A549 (cell line): ENCODE measurements at regions of chr12 and their contacts with region 1.

Region 1: DNA sequence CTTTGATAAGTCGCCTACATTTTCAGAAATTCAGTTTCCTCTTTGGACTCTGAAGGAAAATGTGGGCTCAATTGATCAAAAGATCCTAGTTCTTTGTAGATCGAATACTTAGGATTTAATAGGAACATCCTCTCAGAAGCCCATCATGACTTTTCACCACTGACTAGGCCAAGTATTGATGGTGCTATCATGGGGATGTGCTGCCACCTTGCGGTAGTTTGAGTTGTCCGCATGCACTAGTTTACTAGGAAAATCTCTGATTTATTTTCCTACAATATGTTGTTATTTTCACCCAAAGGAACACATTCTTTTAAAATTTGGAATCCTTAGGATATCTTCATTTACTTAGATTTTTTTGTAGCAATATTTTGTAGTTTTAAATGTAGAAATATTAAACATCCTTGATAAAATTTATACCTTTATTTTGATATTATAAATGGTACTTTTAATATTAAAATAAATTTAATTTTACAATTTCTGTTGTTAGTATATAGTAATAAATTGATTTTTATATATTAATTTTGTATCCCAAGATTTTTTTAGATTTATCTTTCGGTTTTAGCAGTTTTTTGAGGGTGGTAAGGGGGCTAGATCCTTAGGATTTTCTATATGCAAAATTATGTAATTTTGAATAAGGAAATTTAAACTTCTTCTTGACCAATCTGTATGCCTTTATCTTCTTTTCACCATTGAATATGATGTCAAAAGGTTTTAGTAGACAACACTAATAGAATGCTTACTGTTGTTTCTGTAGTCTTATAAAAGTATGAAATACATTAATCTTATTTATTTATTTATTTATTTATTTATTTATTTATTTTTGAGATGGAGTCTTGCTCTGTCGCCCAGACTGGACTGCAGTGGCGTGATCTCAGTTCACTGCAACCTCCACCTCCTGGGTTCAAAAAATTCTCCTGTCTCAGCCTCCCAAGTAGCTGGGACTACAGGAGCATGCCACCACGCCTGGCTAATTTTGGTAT is 52.9 kb upstream of the OR9K2 start:
- DNase-seq: peak; percentile 42 to 82
- ATAC-seq: peak; percentile 87 to 89
- H3K4me3 ChIP-seq: no peak overlapping the region
- H3K27ac ChIP-seq: no peak overlapping the region
- H3K4me1 ChIP-seq: no peaks in the 10 kb centered on the region
- CTCF ChIP-seq: peak; percentile 95
- EP300 ChIP-seq: no peak
- POLR2A ChIP-seq: no peak
- RAD21 ChIP-seq: peak; percentile 85 to 93

Region 2: DNA sequence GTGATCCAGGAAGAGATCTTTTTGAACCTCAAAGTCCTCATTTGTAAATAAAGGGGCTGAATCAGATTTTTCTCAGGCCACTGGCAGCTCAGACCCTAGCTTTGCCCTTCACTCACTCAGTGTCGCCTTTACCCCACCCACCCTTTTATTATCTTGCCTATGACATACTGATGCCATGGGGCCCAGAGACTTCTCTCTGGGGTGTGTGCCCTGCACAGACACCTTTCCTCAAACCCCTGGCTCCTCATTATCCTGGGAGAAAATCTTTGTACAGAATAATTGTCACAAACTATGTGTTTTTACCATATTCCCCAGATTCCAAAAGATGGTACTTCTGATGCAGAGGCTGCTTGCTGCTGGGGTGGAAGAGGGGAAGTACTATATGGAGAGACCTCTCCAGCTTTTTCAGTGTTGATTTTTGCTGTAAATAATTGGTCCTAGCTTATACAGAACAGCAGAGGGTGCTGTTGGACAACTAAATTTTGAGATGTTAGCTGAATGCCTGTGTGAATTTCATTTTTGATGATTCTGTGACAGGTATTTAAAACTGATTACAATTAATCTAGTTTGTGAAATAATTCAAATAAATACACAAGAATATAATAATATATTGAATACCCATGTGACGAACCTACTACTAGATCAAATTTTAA is 371.3 kb before region 1 on chr12:
- CTCF ChIA-PET with region 1: interaction called, 10 read pairs
- POLR2A ChIA-PET with region 1: no interaction called
- DNase-seq: peak; percentile 34 to 55
- ATAC-seq: peak; percentile 57 to 88; a peak in 4 of 6 replicates
- H3K4me3 ChIP-seq: no peak overlapping the region
- H3K27ac ChIP-seq: no peak overlapping the region
- H3K4me1 ChIP-seq: no peaks in the 10 kb centered on the region
- CTCF ChIP-seq: peak; percentile 70
- EP300 ChIP-seq: no peak
- POLR2A ChIP-seq: no peak
- RAD21 ChIP-seq: peak; percentile 67 to 73

Region 3: DNA sequence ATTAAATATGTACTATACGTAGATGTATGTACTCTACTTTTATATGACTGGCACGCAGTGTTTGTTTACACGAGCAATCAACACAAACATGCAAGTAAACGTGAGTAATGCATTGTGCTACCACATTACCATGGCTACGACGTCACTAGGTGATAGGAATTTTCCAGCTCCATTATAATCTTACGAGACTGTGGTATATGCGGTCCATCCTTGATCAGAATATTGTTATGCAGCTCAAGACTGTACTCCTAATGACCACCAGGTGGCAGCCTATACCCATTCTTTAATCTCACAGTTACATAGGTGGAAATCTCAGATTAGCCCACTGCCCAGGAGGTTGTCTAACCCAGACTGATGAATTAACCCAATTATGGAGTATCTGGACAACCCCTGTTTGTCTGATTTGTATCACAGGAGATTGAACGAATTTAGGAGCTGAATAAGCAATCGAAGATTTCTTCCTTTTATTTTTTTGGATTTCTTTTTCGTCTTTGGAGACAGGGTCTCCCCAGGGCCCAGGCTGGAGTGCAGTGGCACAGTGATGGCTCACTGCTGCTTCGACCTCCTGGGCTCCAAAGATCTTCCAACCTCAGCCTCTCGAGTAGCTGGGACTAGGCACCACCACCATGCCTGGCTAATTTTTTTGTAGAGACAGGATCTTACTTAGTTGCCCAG is 80.0 kb before region 1 on chr12:
- CTCF ChIA-PET with region 1: interaction called, 268 read pairs
- POLR2A ChIA-PET with region 1: no interaction called
- DNase-seq: peak; percentile 63 to 75
- ATAC-seq: peak; percentile 89 to 97
- H3K4me3 ChIP-seq: no peak overlapping the region
- H3K27ac ChIP-seq: no peak overlapping the region
- H3K4me1 ChIP-seq: no peaks in the 10 kb centered on the region
- CTCF ChIP-seq: peak; percentile 90
- EP300 ChIP-seq: no peak
- POLR2A ChIP-seq: no peak
- RAD21 ChIP-seq: peak; percentile 86 to 91

Region 4: GRCh38 chr12:55001198-55001868 is 72.0 kb before region 1 on chr12:
- CTCF ChIA-PET with region 1: interaction called, 268 read pairs
- POLR2A ChIA-PET with region 1: no interaction called
- DNase-seq: no peak
- ATAC-seq: no peak
- H3K4me3 ChIP-seq: no peak overlapping the region
- H3K27ac ChIP-seq: no peak overlapping the region
- H3K4me1 ChIP-seq: no peaks in the 10 kb centered on the region
- CTCF ChIP-seq: no peak
- EP300 ChIP-seq: no peak
- POLR2A ChIP-seq: no peak
- RAD21 ChIP-seq: no peak

Region 5: DNA sequence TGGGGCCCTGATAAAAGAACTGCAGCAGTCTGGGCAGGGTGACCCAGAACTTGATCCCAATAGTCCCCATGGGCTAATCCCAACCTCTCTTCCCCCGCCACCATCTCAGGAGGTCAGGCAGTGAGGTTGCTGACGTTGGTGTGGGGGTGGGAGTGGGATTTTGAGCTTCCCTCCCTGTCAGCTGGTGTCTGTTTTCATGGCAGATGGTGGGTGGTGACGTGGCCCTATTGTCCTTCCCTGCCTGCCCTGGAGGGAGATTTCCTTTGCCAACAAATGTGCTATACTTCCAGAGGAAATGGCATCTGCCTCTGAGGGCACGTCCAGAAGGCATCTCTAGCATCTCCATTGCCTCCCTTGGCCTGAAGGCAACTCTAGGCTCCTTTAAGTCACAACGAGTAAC is 15.9 kb before region 1 on chr12:
- CTCF ChIA-PET with region 1: interaction called, 27 read pairs
- POLR2A ChIA-PET with region 1: no interaction called
- DNase-seq: no peak
- ATAC-seq: no peak
- H3K4me3 ChIP-seq: no peak overlapping the region
- H3K27ac ChIP-seq: no peak overlapping the region
- H3K4me1 ChIP-seq: no peaks in the 10 kb centered on the region
- CTCF ChIP-seq: no peak
- EP300 ChIP-seq: no peak
- POLR2A ChIP-seq: no peak
- RAD21 ChIP-seq: no peak

Region 6: GRCh38 chr12:55063291-55063690 is 10.0 kb before region 1 on chr12:
- CTCF ChIA-PET with region 1: interaction called, 27 read pairs
- POLR2A ChIA-PET with region 1: no interaction called
- DNase-seq: no peak
- ATAC-seq: no peak
- H3K4me3 ChIP-seq: no peak overlapping the region
- H3K27ac ChIP-seq: no peak overlapping the region
- H3K4me1 ChIP-seq: no peaks in the 10 kb centered on the region
- CTCF ChIP-seq: no peak
- EP300 ChIP-seq: no peak
- POLR2A ChIP-seq: no peak
- RAD21 ChIP-seq: no peak

Region 7: GRCh38 chr12:55289999-55290398 is 216.7 kb after region 1 on chr12:
- CTCF ChIA-PET with region 1: no interaction called
- POLR2A ChIA-PET with region 1: no interaction called
- DNase-seq: no peak
- ATAC-seq: no peak
- H3K4me3 ChIP-seq: no peak overlapping the region
- H3K27ac ChIP-seq: no peak overlapping the region
- H3K4me1 ChIP-seq: no peaks in the 10 kb centered on the region
- CTCF ChIP-seq: no peak
- EP300 ChIP-seq: no peak
- POLR2A ChIP-seq: no peak
- RAD21 ChIP-seq: no peak